IMR-90 (cell line): ENCODE measurements at regions of chr4 and their contacts with region 1.

Region 1: GRCh38 chr4:142778430-142778829 is 67.7 kb downstream of the INPP4B start:
- DNase-seq: peak; percentile 74
- ATAC-seq: peak; percentile 72
- H3K4me3 ChIP-seq: no peak overlapping the region
- H3K27ac ChIP-seq: no peak overlapping the region
- H3K4me1 ChIP-seq: 0 out of 2 replicates have a peak, but pooled peaks cover 1% of the 10 kb centered on the region
- H3K27me3 ChIP-seq: no peaks in the 10 kb centered on the region
- CTCF ChIP-seq: no peak
- POLR2A ChIP-seq: no peak
- RAD21 ChIP-seq: no peak

Region 2: GRCh38 chr4:142925161-142925560 is 146.7 kb after region 1 on chr4:
- CTCF ChIA-PET with region 1: no interaction called
- POLR2A ChIA-PET with region 1: no interaction called
- dilution Hi-C with region 1: no loop called
- in situ Hi-C with region 1: no loop called
- intact Hi-C with region 1: loop called (anchors 10 kb)
- DNase-seq: no peak
- ATAC-seq: no peak
- H3K4me3 ChIP-seq: no peak overlapping the region
- H3K27ac ChIP-seq: no peak overlapping the region
- H3K4me1 ChIP-seq: no peaks in the 10 kb centered on the region
- H3K27me3 ChIP-seq: no peaks in the 10 kb centered on the region
- CTCF ChIP-seq: no peak
- POLR2A ChIP-seq: no peak
- RAD21 ChIP-seq: no peak